A673 (cell line): ENCODE measurements at regions of chr15 and their contacts with region 1.

Region 1: GRCh38 chr15:59369597-59369996 is 3.1 kb downstream of the MYO1E start:
- DNase-seq: no peak
- H3K4me3 ChIP-seq: no peak overlapping the region
- H3K27ac ChIP-seq: no peak overlapping the region
- H3K4me1 ChIP-seq: no peaks in the 10 kb centered on the region
- H3K27me3 ChIP-seq: peaks cover 21% of the 10 kb centered on the region
- CTCF ChIP-seq: no peak

Region 2: GRCh38 chr15:58839485-58839884 is 530.1 kb before region 1 on chr15:
- CTCF ChIA-PET with region 1: no interaction called
- POLR2A ChIA-PET with region 1: no interaction called
- intact Hi-C with region 1: no loop called
- DNase-seq: peak; percentile 14
- H3K4me3 ChIP-seq: no peak overlapping the region
- H3K27ac ChIP-seq: no peak overlapping the region
- H3K4me1 ChIP-seq: no peaks in the 10 kb centered on the region
- H3K27me3 ChIP-seq: no peaks in the 10 kb centered on the region
- CTCF ChIP-seq: peak; percentile 48

Region 3: GRCh38 chr15:58909616-58910015 is 460.0 kb before region 1 on chr15:
- CTCF ChIA-PET with region 1: no interaction called
- POLR2A ChIA-PET with region 1: no interaction called
- intact Hi-C with region 1: no loop called
- DNase-seq: no peak
- H3K4me3 ChIP-seq: no peak overlapping the region
- H3K27ac ChIP-seq: no peak overlapping the region
- H3K4me1 ChIP-seq: no peaks in the 10 kb centered on the region
- H3K27me3 ChIP-seq: no peaks in the 10 kb centered on the region
- CTCF ChIP-seq: no peak

Region 4: DNA sequence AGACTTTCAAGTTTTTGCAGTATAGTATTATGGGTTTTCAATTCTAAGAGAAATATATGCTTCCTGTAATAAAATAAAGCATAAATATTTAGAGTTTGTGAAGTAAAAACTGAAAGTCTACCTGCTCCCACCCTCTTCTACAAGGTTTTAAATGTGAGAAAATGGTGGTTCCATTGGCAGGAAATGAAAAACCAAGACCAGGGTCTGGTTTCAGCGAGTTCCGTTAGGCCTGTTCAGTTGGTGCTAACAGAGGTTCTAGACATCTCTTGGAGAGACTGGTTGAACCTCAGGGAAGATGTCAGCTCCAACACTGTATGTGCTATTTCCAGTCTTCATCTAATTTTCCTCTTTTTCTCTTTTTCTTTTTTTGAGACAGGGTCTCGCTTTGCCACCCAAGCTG is 14.9 kb after region 1 on chr15:
- CTCF ChIA-PET with region 1: no interaction called
- POLR2A ChIA-PET with region 1: interaction called, 11 read pairs
- intact Hi-C with region 1: no loop called
- DNase-seq: no peak
- H3K4me3 ChIP-seq: no peak overlapping the region
- H3K27ac ChIP-seq: no peak overlapping the region
- H3K4me1 ChIP-seq: no peaks in the 10 kb centered on the region
- H3K27me3 ChIP-seq: no peaks in the 10 kb centered on the region
- CTCF ChIP-seq: no peak

Region 5: DNA sequence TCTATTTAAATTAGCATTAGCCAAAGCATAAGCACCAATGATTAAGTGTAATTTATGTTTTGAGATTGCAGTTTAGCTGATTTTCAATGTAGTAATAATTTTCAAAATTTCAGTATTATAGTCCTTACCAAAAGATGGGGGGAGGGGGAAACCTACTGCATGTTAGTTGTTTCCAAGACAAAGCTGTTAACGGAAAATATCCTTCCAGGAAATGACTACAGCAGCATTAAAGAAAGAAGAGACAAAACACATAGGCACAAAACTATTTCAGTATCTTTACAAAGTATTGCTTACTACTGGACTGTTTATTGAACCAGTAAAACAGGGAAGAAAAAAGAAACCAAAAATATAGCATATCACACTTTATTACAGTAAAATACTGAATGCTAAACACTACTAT is 309.0 kb after region 1 on chr15:
- CTCF ChIA-PET with region 1: no interaction called
- POLR2A ChIA-PET with region 1: no interaction called
- intact Hi-C with region 1: no loop called
- DNase-seq: no peak
- H3K4me3 ChIP-seq: no peak overlapping the region
- H3K27ac ChIP-seq: no peak overlapping the region
- H3K4me1 ChIP-seq: peaks cover 6% of the 10 kb centered on the region
- H3K27me3 ChIP-seq: no peaks in the 10 kb centered on the region
- CTCF ChIP-seq: no peak